ENCODE measurements at regions of chr10 and their contacts with region 1.

Region 1: GRCh38 chr10:22316285-22317120 is at the start of gene COMMD3:
- DNase-seq: peak; percentile 72
- H3K4me3 ChIP-seq: peak within 1 kb of the TSS; percentile 72
- CTCF ChIP-seq: no peak

Region 2: GRCh38 chr10:22228943-22229801 is 87.3 kb before region 1 on chr10:
- in situ Hi-C with region 1: loop called (anchors 5 kb)
- DNase-seq: peak; percentile 73
- H3K4me3 ChIP-seq: peak overlapping the region; percentile 63
- CTCF ChIP-seq: no peak

Region 3: GRCh38 chr10:22277705-22278104 is 38.8 kb before region 1 on chr10:
- in situ Hi-C with region 1: no loop called
- DNase-seq: no peak
- H3K4me3 ChIP-seq: no peak overlapping the region
- CTCF ChIP-seq: no peak

Region 4: DNA sequence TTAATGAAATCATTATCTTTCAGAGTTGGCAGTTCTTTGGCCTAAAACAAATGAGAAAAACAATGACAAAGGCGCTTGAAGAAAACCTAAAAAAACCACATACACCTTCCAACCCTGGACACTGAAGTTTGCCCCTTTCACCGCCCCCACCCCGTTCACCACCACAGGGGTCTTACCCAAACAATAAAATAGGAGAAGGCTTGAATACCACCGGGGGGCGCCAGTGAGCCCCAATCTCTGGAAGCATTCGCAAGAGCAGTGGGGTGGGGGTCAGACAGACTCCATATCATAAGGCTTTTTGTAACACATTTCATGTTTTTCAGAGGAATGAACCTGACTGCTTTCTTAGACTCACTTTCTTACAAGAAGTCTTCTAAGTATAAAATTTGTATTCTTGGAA is 234.2 kb after region 1 on chr10:
- in situ Hi-C with region 1: loop called (anchors 25 kb)
- DNase-seq: no peak
- H3K4me3 ChIP-seq: no peak overlapping the region
- CTCF ChIP-seq: peak; percentile 52

Measured in astrocyte of the cerebellum (primary cell).